MCF 10A (cell line): ENCODE measurements at regions of chr4 and their contacts with region 1.

Region 1: DNA sequence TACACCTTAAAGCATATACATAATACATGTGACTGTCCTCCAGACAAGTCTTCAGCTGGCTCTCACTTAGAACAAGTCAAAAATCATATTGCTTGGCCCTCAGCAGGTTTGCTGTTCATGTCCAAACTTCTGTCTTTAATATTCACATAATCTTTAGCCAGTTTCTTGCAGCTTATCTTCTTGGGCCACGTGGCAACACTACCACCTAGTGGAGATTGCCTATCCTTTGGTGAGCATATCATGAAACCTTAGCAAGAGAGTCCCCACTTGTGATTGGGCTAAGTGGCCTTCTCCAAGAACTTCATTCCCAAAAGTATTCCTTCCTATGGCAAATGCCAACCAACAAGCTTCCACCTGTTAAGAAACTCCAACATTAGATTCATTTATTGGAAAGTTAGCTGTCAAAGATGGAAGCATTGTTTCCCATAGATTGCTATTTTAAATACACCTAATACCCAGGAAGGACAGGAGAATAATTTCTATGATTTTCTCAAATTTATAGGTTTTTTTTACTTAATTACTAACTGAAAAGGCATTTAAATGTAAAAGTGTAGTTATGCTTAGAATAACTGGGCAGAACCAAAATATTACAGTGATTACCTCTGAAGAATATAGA is 231.9 kb upstream of the INTU start:
- DNase-seq: peak; percentile 82
- H3K4me3 Mint-ChIP-seq: no peak overlapping the region
- H3K27ac Mint-ChIP-seq: no peak overlapping the region
- H3K4me1 Mint-ChIP-seq: no peaks in the 10 kb centered on the region
- H3K27me3 Mint-ChIP-seq: no peaks in the 10 kb centered on the region
- CTCF ChIP-seq: peak; percentile 85

Region 2: DNA sequence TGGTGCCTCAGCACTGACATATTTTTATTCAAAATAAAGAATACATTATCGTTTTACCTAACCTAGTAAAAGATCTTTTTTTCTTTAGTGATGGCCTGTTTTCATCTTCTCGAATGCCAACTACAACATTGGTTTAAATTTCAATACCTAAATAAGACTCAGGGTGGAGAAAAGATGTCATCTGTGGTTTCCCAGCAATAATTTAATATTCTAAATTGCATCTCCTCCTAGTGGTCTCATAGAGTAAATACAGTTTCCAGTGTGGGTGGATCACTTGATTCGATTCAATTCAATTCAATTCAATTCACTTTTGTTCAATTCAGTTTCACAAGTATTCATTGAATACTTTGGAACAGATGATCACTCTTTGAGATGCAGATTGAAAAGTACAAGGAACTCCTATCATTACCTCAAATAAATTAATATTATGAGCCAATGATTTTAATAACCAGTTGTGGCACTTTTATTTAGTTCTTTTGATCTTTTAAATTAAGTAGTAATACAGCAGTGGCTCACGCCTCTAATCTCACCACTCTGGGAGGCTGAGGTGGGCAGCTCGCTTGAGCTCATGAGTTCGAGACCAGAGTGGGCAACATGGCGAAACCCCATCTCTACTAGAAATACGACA is 1658.9 kb before region 1 on chr4:
- CTCF ChIA-PET with region 1: no interaction called
- POLR2A ChIA-PET with region 1: no interaction called
- intact Hi-C with region 1: loop called (anchors 1 kb)
- DNase-seq: peak; percentile 50
- H3K4me3 Mint-ChIP-seq: no peak overlapping the region
- H3K27ac Mint-ChIP-seq: no peak overlapping the region
- H3K4me1 Mint-ChIP-seq: peaks cover 7% of the 10 kb centered on the region
- H3K27me3 Mint-ChIP-seq: no peaks in the 10 kb centered on the region
- CTCF ChIP-seq: peak; percentile 62

Region 3: GRCh38 chr4:127124920-127125319 is 275.9 kb before region 1 on chr4:
- CTCF ChIA-PET with region 1: interaction called, 4 read pairs
- POLR2A ChIA-PET with region 1: no interaction called
- intact Hi-C with region 1: loop called (anchors 10 kb)
- DNase-seq: peak; percentile 16
- H3K4me3 Mint-ChIP-seq: no peak overlapping the region
- H3K27ac Mint-ChIP-seq: no peak overlapping the region
- H3K4me1 Mint-ChIP-seq: no peaks in the 10 kb centered on the region
- H3K27me3 Mint-ChIP-seq: no peaks in the 10 kb centered on the region
- CTCF ChIP-seq: peak; percentile 26

Region 4: GRCh38 chr4:127188856-127189255 is 212.0 kb before region 1 on chr4:
- CTCF ChIA-PET with region 1: interaction called, 4 read pairs
- POLR2A ChIA-PET with region 1: no interaction called
- intact Hi-C with region 1: loop called (anchors 5 kb)
- DNase-seq: peak; percentile 33
- H3K4me3 Mint-ChIP-seq: no peak overlapping the region
- H3K27ac Mint-ChIP-seq: no peak overlapping the region
- H3K4me1 Mint-ChIP-seq: no peaks in the 10 kb centered on the region
- H3K27me3 Mint-ChIP-seq: no peaks in the 10 kb centered on the region
- CTCF ChIP-seq: peak; percentile 19

Region 5: GRCh38 chr4:127284236-127284635 is 116.6 kb before region 1 on chr4:
- CTCF ChIA-PET with region 1: no interaction called
- POLR2A ChIA-PET with region 1: no interaction called
- intact Hi-C with region 1: no loop called
- DNase-seq: peak; percentile 18
- H3K4me3 Mint-ChIP-seq: no peak overlapping the region
- H3K27ac Mint-ChIP-seq: no peak overlapping the region
- H3K4me1 Mint-ChIP-seq: no peaks in the 10 kb centered on the region
- H3K27me3 Mint-ChIP-seq: no peaks in the 10 kb centered on the region
- CTCF ChIP-seq: no peak